AG04449 (cell line): ENCODE measurements at regions of chr12 and their contacts with region 1.

Region 1: DNA sequence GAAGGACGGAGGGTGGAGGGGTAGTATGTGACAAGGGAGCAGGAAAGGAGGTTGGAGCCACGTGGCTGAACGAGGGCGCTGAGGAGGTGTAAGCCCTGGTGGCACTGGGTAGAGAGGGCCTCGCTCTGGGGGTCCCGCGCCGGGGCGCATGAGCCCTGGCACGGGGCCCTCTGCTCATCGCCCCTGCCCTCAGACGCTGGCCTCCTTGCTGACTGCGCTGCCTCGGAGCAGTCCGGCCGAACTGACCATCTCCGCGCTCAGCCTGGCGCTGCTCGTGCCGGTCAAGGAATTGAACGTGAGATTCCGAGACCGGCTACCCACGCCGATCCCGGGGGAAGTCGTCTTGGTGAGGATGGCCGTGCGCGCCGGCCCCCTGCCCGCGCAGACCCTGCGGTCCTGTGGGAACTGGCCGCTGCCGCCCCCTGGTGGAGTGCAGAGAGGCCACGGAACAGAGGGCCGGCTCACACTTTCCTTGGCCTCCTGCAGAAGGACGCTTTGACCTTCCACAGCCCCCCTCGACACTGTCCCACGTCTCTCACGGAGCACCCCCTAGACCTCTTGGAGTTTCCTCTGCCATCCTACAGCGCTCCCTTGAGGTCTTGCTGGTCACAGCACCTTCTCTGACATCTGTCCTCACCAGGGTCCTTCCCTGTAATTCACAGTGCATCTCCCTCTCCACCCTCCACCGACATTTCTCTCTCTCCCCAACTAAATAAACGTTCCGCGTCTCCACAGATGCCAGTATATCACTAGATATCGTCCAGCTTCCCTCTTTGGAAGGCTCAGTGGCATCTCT is 10.5 kb downstream of the ARHGEF25 start:
- DNase-seq: no peak
- H3K4me3 ChIP-seq: peak overlapping the region; percentile 50
- CTCF ChIP-seq: peak; percentile 92

Region 2: DNA sequence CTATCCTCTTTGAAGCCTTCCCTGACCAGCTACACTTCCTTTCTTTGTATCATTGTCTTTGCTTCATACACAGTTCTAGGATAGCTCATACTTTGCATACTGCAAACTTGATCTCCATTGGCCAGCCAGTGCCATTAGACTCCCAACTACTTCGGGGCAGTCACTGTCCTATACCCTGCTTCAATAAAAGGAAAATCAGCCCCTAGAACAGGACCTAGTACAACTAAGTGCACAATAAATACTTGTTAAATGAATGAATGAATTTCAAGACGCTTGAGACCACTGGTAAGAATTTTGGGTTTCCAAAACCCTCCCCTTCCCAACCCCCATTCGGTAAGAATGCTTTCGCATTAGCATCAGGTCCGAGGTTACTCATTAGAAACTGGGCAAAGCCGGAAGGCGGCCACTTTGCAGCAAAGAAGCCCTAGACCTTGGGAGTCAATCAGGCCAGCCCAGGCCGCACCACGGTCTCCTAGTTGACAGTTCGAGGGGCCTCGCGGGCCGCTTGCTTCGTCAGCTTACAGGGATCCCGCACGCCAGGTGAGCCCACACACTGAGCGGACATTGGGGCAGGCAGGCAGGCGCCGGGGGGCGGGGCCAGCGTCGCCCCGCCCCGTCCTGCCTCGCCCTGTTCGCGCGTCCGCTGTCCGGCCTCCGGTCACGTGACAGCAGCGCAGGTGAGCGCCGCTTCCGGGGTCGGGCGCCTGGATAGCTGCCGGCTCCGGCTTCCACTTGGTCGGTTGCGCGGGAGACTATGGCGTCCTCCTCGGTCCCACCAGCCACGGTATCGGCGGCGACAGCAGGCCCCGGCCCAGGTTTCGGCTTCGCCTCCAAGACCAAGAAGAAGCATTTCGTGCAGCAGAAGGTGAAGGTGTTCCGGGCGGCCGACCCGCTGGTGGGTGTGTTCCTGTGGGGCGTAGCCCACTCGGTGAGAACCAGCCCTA is 30.9 kb before region 1 on chr12 and contains the start of gene PIP4K2C:
- CTCF ChIA-PET with region 1: interaction called, 186 read pairs
- POLR2A ChIA-PET with region 1: no interaction called
- DNase-seq: no peak
- H3K4me3 ChIP-seq: peak within 1 kb of the TSS; percentile 83
- CTCF ChIP-seq: no peak

Region 3: DNA sequence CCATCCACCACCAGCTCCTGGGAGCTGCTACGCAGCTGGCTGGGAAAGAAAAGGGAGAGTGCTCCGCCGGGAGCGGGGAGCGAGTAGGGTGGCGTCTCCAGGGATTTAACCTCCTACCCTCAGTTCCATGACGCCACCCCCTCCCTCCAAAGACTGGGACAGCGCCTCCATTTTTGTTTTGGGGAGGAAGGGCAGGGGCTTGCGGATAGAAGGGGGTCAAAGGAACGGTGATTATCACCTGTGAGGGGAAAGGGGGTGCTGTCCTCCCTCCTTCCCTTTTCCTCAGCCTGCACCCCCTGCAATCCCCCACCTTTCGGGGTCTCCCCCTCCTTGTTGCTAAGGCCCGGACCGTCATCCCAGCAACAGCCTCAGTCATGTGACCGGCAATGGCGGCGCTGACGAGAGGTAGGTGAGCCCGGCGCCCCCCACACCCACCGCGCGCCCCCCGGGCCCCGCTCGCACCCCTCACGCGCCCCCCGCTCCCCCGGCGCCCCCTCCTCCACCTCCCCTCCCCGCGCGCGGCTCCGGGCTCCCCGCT is 17.2 kb before region 1 on chr12 and contains the start of gene DTX3:
- CTCF ChIA-PET with region 1: interaction called, 18 read pairs
- POLR2A ChIA-PET with region 1: no interaction called
- DNase-seq: no peak
- H3K4me3 ChIP-seq: peak within 1 kb of the TSS; percentile 71
- CTCF ChIP-seq: no peak

Region 4: DNA sequence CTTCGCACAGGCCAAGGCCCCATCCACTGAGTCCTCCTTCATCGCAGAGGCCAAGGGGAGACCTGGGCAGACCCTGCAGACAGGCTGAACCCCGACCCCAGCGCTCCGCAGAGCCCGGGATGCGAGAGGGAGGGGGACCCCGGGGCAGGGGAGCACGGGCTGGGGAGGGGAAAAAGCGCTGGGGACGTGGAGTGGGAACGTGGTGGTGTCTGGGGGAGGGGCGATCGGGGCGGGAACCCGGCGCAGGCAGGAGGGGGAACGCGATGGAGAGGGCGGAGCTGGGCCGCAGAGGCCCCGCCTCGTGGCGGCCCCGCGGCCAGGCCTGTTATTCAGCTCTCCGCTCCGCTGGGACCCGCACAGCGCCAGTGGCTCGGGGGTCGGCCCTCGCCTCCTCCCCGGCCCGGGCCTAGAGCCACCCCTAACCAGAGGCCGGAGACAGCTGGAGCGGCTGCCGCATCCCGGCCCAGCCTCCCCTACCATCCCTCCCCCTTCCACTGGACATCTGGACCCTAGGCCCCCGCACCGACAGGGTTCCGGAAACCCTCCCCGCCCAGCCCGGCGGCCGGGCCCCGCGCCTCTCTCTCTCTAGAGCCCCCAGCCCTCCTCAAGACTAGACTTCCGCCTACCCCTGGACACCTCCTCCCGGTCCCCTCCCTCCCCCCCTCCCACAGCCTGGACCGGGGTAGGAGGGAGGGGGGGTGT is 10.4 kb before region 1 on chr12 and contains the start of gene ARHGEF25:
- CTCF ChIA-PET with region 1: interaction called, 31 read pairs
- POLR2A ChIA-PET with region 1: interaction called, 5 read pairs
- DNase-seq: no peak
- H3K4me3 ChIP-seq: peak within 1 kb of the TSS; percentile 70
- CTCF ChIP-seq: no peak

Region 5: DNA sequence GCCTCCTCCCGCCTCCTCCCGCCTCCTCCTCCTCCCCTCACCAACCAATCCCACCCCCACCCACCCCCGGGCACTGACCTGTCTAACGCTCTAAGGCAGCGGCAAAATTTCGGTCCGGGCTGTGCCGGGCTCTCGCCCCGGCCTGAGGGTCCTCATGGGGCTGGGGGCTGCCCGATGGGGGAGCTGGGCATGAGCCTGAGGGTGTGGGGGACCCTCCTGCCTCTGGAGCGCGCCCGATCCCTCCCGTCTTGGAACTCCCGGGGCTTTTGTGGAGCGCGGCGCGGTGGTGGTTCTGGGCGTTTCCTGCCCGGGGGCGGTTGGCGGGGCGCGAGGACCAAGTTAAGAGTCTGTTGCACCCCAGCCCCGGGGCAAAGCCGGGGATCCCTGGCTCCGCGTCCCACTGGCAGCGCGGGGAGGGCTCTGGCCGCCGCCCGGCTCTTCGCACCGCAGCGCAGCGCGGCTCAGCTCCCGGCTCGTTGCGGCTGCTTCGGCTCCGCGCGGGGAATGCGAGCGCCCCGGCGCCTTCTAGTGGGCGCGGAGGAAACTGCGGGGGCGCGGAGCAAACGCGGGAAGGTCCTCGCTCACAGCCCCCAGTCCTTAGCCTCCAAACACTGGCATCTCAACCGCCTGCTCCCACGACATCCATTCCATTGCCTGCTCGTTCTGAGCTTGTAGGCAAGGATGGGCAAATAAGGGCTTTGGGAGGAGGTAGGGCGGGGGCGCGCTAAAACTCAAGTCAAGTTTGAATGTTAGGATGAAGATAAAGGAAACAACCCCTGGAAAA is 11.2 kb after region 1 on chr12 and contains the start of gene B4GALNT1:
- CTCF ChIA-PET with region 1: interaction called, 68 read pairs
- POLR2A ChIA-PET with region 1: interaction called, 4 read pairs
- DNase-seq: no peak
- H3K4me3 ChIP-seq: peak within 1 kb of the TSS; percentile 67
- CTCF ChIP-seq: peak; percentile 93

Region 6: GRCh38 chr12:57741844-57742738 is 120.4 kb after region 1 on chr12:
- CTCF ChIA-PET with region 1: no interaction called
- POLR2A ChIA-PET with region 1: no interaction called
- DNase-seq: no peak
- H3K4me3 ChIP-seq: no peak overlapping the region
- CTCF ChIP-seq: no peak

Region 7: GRCh38 chr12:57904848-57905811 is 283.4 kb after region 1 on chr12:
- CTCF ChIA-PET with region 1: no interaction called
- POLR2A ChIA-PET with region 1: no interaction called
- DNase-seq: no peak
- H3K4me3 ChIP-seq: no peak overlapping the region
- CTCF ChIP-seq: peak; percentile 100